Activated naive CD4-positive, alpha-beta T cell treated with anti-CD3 and anti-CD28 coated beads, Interleukin-2, amount 10 ng/mL, durations not matched to agents 7 days and 5 days (primary cell): ENCODE measurements at regions of chr12 and their contacts with region 1.

Region 1: GRCh38 chr12:6533923-6534694 is at the start of gene GAPDH:
- DNase-seq: peak; percentile 93
- H3K4me3 Mint-ChIP-seq: peak within 1 kb of the TSS; percentile 98
- H3K27ac Mint-ChIP-seq: peak within 1 kb of the TSS; percentile 99
- H3K4me1 Mint-ChIP-seq: peaks cover 58% of the 10 kb centered on the region
- H3K27me3 Mint-ChIP-seq: peaks cover 9% of the 10 kb centered on the region

Region 2: GRCh38 chr12:6116175-6117021 is 417.7 kb before region 1 on chr12:
- CTCF ChIA-PET with region 1: no interaction called
- DNase-seq: no peak
- H3K4me3 Mint-ChIP-seq: no peak overlapping the region
- H3K27ac Mint-ChIP-seq: no peak overlapping the region
- H3K4me1 Mint-ChIP-seq: no peaks in the 10 kb centered on the region
- H3K27me3 Mint-ChIP-seq: peaks cover 40% of the 10 kb centered on the region

Region 3: GRCh38 chr12:6554168-6555017 is 20.3 kb after region 1 on chr12:
- CTCF ChIA-PET with region 1: interaction called, 128 read pairs
- DNase-seq: peak; percentile 84
- H3K4me3 Mint-ChIP-seq: peak overlapping the region; percentile 89
- H3K27ac Mint-ChIP-seq: peak overlapping the region; percentile 29
- H3K4me1 Mint-ChIP-seq: peaks cover 60% of the 10 kb centered on the region
- H3K27me3 Mint-ChIP-seq: no peaks in the 10 kb centered on the region

Region 4: DNA sequence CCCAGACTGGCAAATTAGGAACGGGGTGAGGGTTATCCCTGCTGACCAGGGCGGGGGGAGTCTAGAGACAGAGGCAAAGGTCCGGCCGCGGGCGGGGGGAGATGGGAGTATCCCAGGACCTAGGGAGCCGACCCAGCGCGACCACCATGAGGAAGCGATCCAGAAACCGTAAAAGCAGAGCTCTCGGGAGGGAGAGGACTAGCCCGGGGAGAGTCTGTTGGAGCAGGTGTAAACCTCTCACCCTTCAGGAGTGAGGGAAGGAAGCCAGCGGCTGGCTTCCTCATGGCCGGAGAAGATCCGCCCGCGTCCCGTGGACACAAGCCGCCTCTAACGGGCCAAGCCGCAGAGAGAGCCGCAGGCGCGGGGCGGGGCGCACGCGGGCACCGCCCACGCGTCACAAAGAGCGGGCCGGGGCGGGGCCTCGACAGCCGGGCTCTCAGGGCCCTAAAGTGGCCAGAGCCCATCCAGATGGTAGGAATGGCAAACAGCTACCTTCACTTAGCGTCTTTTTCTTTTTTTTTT is 113.0 kb after region 1 on chr12 and contains the start of gene ACRBP:
- CTCF ChIA-PET with region 1: no interaction called
- DNase-seq: peak; percentile 56
- H3K4me3 Mint-ChIP-seq: peak within 1 kb of the TSS; percentile 63
- H3K27ac Mint-ChIP-seq: no peak within 1 kb of the TSS
- H3K4me1 Mint-ChIP-seq: peaks cover 19% of the 10 kb centered on the region
- H3K27me3 Mint-ChIP-seq: peaks cover 28% of the 10 kb centered on the region

Region 5: DNA sequence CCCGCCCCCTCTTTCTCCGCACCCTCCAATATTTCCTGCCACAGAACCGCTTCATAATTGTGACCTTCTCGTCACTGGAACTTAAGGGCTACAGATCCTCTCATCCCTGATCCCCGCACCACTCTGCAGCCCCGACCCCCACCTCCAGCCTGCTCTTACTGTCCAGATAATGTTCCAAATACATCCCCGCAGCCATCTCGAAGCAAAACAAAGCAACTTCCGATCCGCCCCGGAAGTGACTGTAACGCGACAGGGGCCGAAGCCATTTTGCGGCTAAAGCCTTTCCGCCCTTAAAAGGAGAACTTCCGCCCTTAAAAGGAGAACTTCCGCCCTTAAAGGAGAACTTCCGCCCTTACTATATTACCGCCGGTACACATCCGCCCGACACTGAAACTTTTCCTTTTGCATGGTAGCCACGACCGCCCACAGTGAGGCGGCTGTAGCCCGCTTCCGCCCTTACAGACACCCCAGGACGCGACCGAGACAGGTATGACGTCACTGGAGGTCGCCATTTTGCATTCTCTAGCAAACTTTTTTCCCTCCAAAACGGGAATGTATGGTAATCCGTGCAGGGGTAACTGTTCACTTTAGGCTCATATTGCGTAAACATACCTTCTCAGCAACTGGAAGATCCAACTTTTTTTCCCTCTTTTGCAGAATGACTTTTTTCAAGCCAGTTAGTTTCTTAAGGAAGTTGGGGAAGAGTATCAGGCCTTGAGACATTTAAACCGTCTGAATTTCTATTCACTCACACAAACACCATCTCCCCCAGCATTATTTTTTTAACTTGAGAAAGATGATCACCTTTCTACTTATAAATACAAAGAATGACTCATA is 129.0 kb after region 1 on chr12 and contains the start of gene ING4:
- CTCF ChIA-PET with region 1: no interaction called
- DNase-seq: peak; percentile 98
- H3K4me3 Mint-ChIP-seq: peak within 1 kb of the TSS; percentile 85
- H3K27ac Mint-ChIP-seq: peak within 1 kb of the TSS; percentile 90
- H3K4me1 Mint-ChIP-seq: peaks cover 32% of the 10 kb centered on the region
- H3K27me3 Mint-ChIP-seq: no peaks in the 10 kb centered on the region

Region 6: GRCh38 chr12:6691473-6691872 is 157.4 kb after region 1 on chr12:
- CTCF ChIA-PET with region 1: no interaction called
- DNase-seq: no peak
- H3K4me3 Mint-ChIP-seq: no peak overlapping the region
- H3K27ac Mint-ChIP-seq: no peak overlapping the region
- H3K4me1 Mint-ChIP-seq: peaks cover 27% of the 10 kb centered on the region
- H3K27me3 Mint-ChIP-seq: peaks cover 10% of the 10 kb centered on the region